ENCODE measurements at regions of chr2 and their contacts with region 1.

Region 1: DNA sequence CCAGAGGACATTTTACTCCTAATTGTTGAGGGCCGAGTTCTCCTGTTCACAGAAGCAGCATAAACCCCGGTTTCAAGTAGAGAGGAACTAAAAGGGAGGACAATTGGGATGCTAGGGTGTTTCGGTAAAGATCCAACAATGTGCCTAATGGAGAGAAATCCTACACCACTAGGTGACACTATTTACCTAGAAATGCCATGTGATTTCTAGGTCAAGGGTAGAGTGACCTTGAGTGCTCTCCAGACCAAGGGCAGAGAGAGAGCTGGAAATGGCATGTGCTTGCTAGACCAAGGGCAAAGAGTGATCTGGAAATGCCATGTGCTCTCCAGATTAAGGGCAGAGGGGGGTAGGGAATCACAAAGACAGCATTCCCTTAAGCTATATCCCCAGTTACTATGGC is 472.0 kb downstream of the DCDC2C start:
- DNase-seq: no peak
- H3K4me3 Mint-ChIP-seq: no peak overlapping the region
- H3K27ac Mint-ChIP-seq: peak overlapping the region; percentile 10
- H3K4me1 Mint-ChIP-seq: no peaks in the 10 kb centered on the region
- H3K27me3 Mint-ChIP-seq: no peaks in the 10 kb centered on the region
- CTCF ChIP-seq: no peak

Region 2: DNA sequence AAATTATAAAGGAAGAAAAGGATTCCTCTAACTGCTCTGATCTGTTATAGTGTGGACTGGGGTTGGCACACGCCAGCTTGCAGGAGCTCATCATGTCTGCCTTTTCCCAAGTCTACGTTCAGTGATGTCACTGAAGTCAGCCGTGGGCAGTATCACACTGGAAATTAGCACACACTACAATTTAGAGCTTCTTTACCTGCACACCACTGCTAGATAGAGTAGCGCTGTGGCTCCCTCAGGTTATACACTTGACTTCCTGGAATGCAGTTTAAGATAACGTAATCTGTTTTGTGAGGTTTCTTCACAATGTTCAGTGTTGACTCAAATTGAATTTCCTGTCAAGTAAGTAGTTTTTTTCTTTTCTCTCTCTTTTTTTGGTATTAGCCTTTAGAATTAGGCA is 15.2 kb after region 1 on chr2:
- CTCF ChIA-PET with region 1: no interaction called
- POLR2A ChIA-PET with region 1: no interaction called
- intact Hi-C with region 1: no loop called
- DNase-seq: peak; percentile 9
- H3K4me3 Mint-ChIP-seq: no peak overlapping the region
- H3K27ac Mint-ChIP-seq: no peak overlapping the region
- H3K4me1 Mint-ChIP-seq: peaks cover 11% of the 10 kb centered on the region
- H3K27me3 Mint-ChIP-seq: no peaks in the 10 kb centered on the region
- CTCF ChIP-seq: no peak

Region 3: GRCh38 chr2:4715069-4715468 is 539.7 kb after region 1 on chr2:
- CTCF ChIA-PET with region 1: interaction called, 5 read pairs
- POLR2A ChIA-PET with region 1: no interaction called
- intact Hi-C with region 1: loop called (anchors 1 kb)
- DNase-seq: peak; percentile 35
- H3K4me3 Mint-ChIP-seq: no peak overlapping the region
- H3K27ac Mint-ChIP-seq: no peak overlapping the region
- H3K4me1 Mint-ChIP-seq: peaks cover 4% of the 10 kb centered on the region
- H3K27me3 Mint-ChIP-seq: no peaks in the 10 kb centered on the region
- CTCF ChIP-seq: peak; percentile 33

Region 4: GRCh38 chr2:4762951-4763376 is 587.6 kb after region 1 on chr2:
- CTCF ChIA-PET with region 1: no interaction called
- POLR2A ChIA-PET with region 1: no interaction called
- intact Hi-C with region 1: loop called (anchors 5 kb)
- DNase-seq: peak; percentile 50
- H3K4me3 Mint-ChIP-seq: no peak overlapping the region
- H3K27ac Mint-ChIP-seq: peak overlapping the region; percentile 63
- H3K4me1 Mint-ChIP-seq: peaks cover 8% of the 10 kb centered on the region
- H3K27me3 Mint-ChIP-seq: no peaks in the 10 kb centered on the region
- CTCF ChIP-seq: peak; percentile 64